ENCODE measurements at regions of chr19 and their contacts with region 1.

Region 1: DNA sequence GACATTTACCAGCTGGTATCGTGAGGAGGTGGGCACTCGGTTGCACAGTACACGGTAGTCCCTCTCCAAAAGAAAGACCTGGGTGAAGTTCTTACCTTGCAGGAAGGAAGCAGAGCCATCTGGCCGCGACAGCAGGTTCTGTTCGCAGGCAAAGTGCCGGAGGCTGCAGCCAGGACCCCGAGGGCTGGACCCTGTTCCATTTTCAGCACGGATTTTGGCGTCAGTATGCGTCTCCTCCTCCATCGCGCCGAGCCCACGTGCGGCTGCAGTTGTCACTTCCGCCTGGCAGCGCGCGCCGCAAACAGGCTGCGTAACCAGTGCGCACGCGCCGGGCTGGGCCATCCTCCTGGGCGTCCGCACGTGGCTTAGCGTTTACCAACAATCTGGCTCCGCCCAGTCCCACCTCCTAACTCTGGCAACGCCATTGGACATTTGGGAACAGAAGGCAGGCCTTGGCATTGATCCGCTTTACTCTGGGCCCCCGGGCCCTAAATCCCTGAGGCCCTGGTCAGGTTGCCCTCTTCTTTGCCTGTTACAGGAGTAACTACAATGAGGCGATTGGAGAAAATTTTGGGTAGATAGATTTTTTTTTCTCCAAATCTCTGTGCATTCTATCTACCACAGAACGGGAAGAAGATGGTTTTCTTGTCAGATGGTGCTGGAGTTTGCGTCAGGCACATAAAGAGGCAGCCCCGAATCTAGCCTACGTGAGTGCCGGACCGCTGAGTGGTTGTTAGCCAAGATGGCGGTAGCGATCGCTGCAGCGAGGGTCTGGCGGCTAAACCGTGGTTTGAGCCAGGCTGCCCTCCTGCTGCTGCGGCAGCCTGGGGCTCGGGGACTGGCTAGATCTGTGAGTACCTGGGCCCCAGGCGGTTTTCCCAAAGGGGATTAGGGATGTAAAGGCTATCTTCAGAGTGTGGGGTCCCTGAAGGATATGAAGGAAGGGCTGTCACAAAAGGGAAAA is at the starts of genes BCKDHA and EXOSC5:
- DNase-seq: peak; percentile 95
- ATAC-seq: peak; percentile 98
- H3K4me3 Mint-ChIP-seq: peak within 1 kb of the TSS; percentile 98
- H3K27ac Mint-ChIP-seq: peak within 1 kb of the TSS; percentile 99
- H3K4me1 Mint-ChIP-seq: peaks cover 47% of the 10 kb centered on the region
- H3K27me3 Mint-ChIP-seq: no peaks in the 10 kb centered on the region
- CTCF ChIP-seq: no peak
- total RNA-seq, gene BCKDHA: 22.2 and 25.2 TPM in 2 replicates
- total RNA-seq, gene EXOSC5: 30.1 and 31.6 TPM in 2 replicates

Region 2: GRCh38 chr19:41089955-41090354 is 307.4 kb before region 1 on chr19:
- CTCF ChIA-PET with region 1: no interaction called
- POLR2A ChIA-PET with region 1: no interaction called
- intact Hi-C with region 1: no loop called
- DNase-seq: no peak
- ATAC-seq: no peak
- H3K4me3 Mint-ChIP-seq: no peak overlapping the region
- H3K27ac Mint-ChIP-seq: no peak overlapping the region
- H3K4me1 Mint-ChIP-seq: no peaks in the 10 kb centered on the region
- H3K27me3 Mint-ChIP-seq: peaks cover 67% of the 10 kb centered on the region
- CTCF ChIP-seq: no peak

Region 3: DNA sequence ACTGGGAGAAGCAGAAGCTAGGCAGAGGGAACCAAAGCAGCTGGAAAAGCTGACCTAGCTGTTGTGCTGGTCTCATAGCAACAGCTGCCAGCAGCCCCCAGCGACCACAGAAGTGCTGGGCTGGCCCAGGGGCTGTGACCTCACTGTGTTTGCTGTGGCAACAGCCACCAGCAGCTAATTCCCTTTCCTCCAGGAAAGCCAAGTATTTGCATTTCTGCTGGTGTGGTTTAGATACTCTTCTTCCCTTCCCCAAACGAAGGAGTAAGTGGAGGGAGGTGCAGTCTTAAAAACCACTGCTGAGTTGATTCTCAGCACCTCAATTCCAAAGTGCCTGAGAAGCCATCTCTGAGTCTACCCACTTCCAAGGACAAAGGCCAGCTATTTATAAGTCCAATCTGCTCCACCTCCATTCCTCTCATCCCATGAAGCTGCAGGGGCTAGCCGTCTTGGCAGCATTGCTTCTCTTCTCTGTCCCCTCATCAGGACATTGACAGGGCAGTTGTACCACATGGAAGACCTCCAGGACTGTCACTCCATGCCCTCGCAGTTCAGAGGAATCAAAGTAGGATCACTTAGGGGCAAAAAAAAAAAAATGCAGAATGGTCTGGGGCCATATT is 98.9 kb before region 1 on chr19:
- CTCF ChIA-PET with region 1: no interaction called
- POLR2A ChIA-PET with region 1: no interaction called
- intact Hi-C with region 1: loop called (anchors 1 kb)
- DNase-seq: no peak
- ATAC-seq: peak; percentile 15
- H3K4me3 Mint-ChIP-seq: peak overlapping the region; percentile 72
- H3K27ac Mint-ChIP-seq: peak overlapping the region; percentile 96
- H3K4me1 Mint-ChIP-seq: peaks cover 71% of the 10 kb centered on the region
- H3K27me3 Mint-ChIP-seq: no peaks in the 10 kb centered on the region
- CTCF ChIP-seq: no peak

Region 4: DNA sequence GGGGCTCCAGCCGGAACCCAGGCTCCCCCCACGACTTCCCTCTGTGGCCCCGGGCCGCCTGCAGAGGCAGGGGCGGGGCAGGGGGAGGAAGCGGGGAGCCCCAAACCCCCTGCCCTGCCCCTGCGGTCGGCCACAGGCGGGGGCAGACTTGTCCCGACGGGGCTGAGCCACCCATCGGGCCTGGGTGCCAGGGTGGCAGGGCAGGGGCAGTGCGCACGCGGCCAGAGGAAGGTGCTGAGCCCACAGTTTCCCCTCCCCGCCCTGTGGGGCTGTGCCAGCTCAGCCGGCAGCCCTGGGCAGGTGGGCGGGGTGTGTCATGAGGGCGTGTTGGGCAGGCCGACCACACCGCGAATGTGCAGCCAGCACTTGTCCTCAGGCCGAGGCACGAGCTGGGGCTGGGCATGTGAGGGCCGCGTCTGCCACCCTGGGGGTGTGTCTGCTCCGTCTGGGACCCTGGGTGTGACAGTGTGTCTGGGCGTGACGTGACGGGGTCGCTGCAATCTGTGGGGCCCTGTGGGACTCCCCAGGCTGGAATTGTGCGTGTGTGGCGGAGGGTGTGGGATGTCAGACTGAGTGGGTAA is 69.7 kb before region 1 on chr19:
- CTCF ChIA-PET with region 1: no interaction called
- POLR2A ChIA-PET with region 1: no interaction called
- intact Hi-C with region 1: loop called (anchors 1 kb)
- DNase-seq: peak; percentile 77
- ATAC-seq: peak; percentile 71
- H3K4me3 Mint-ChIP-seq: peak overlapping the region; percentile 77
- H3K27ac Mint-ChIP-seq: peak overlapping the region; percentile 91
- H3K4me1 Mint-ChIP-seq: peaks cover 70% of the 10 kb centered on the region
- H3K27me3 Mint-ChIP-seq: no peaks in the 10 kb centered on the region
- CTCF ChIP-seq: no peak

Region 5: GRCh38 chr19:41363753-41364523 is 33.4 kb before region 1 on chr19 and contains the start of gene B9D2:
- CTCF ChIA-PET with region 1: no interaction called
- POLR2A ChIA-PET with region 1: interaction called, 5 read pairs
- intact Hi-C with region 1: loop called (anchors 1 kb)
- DNase-seq: peak; percentile 93
- ATAC-seq: peak; percentile 92
- H3K4me3 Mint-ChIP-seq: peak within 1 kb of the TSS; percentile 96
- H3K27ac Mint-ChIP-seq: peak within 1 kb of the TSS; percentile 100
- H3K4me1 Mint-ChIP-seq: peaks cover 34% of the 10 kb centered on the region
- H3K27me3 Mint-ChIP-seq: no peaks in the 10 kb centered on the region
- CTCF ChIP-seq: no peak
- total RNA-seq, gene B9D2: 11.7 and 14.2 TPM in 2 replicates

Region 6: DNA sequence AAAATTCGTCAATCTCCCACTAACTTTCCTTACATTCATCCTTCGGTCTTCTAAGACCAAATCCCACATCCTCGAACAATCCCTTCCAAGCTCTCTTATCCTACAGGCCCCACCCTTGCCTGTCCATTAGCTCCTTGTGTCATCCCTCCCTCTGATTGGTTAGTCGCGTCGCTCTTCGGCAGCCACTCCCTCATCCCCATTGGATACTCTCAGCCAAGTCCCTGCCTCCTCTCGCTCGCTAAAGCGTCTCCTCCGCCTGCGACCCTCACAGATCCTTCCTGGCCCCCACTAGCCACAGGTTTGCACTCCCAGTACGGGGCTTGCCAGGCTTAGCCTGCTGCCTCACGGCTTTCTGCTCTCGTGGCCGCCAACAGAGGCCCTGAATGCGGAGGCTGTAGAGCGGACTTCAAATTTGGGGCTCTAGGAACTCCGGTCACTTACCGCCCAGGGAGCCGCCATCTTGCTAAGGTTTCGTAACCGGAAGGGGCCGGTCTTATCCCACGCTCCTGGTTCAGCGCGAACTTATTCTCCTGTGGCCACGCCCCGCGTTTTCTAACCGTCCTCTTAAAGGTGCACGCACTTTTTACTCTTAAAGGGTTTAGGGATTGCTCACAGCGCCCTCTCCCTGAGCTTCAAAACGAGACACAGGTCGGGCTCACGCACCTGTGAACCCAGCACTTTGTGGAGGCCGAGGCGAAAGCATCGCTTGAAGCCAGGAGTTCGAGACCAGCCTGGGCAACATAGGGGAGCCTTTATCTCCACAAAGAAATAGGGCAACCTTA is 42.3 kb after region 1 on chr19 and contains the start of gene DMAC2:
- CTCF ChIA-PET with region 1: interaction called, 3 read pairs
- POLR2A ChIA-PET with region 1: interaction called, 3 read pairs
- intact Hi-C with region 1: loop called (anchors 1 kb)
- DNase-seq: peak; percentile 78
- ATAC-seq: peak; percentile 97
- H3K4me3 Mint-ChIP-seq: no peak within 1 kb of the TSS
- H3K27ac Mint-ChIP-seq: no peak within 1 kb of the TSS
- H3K4me1 Mint-ChIP-seq: peaks cover 7% of the 10 kb centered on the region
- H3K27me3 Mint-ChIP-seq: no peaks in the 10 kb centered on the region
- CTCF ChIP-seq: no peak
- total RNA-seq, gene DMAC2: 38.2 and 45.7 TPM in 2 replicates

Region 7: DNA sequence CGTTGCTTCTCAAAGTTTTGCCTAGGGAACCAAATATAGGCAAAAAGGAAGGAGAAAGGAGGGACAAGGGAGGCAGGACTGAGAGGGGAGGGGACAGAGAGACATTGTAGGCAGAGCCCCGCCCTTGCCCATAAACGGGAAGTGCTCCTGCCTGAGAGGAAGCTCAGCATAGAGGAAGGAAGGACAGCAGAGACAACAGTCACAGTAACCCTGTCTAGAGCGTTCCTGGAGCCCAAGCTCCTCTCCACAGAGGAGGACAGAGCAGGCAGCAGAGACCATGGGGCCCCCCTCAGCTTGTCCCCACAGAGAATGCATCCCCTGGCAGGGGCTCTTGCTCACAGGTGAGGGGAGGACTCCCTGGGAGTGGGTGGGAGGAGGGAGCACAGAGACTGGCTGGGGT is 178.6 kb after region 1 on chr19 and contains the start of gene CEACAM21:
- CTCF ChIA-PET with region 1: no interaction called
- POLR2A ChIA-PET with region 1: no interaction called
- intact Hi-C with region 1: loop called (anchors 1 kb)
- DNase-seq: peak; percentile 52
- ATAC-seq: peak; percentile 100
- H3K4me3 Mint-ChIP-seq: peak within 1 kb of the TSS; percentile 81
- H3K27ac Mint-ChIP-seq: peak within 1 kb of the TSS; percentile 91
- H3K4me1 Mint-ChIP-seq: peaks cover 24% of the 10 kb centered on the region
- H3K27me3 Mint-ChIP-seq: no peaks in the 10 kb centered on the region
- CTCF ChIP-seq: no peak
- total RNA-seq, gene CEACAM21: 11.7 and 12.0 TPM in 2 replicates